Right ventricle myocardium superior (tissue), 1 donor: ENCODE measurements at regions of chr1 and their contacts with region 1.

Region 1: DNA sequence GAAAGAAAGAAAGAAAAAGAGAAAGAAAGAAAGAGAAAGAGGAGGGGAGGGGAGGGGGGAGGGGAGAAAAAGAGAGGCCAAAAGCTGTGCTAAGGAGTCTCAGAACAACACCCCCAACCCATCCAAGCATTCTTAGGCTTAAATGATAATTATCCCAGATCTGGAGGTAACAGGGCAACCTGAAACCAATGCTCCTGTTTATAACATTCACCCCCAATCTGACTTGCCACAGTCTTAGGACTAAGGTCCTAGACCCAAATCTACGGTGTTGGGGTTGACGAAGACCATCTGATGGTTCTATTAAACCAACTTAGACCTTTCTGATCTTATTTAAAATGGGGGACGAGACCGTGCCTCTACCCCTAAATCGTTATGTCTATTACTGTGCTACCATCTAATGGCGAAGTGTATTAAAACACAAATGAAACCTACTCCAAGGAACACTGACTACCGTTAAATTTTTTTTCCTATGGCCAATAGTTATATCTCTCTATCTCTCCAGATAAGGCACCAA is 119.3 kb upstream of the CDC42BPA start:
- DNase-seq: no peak
- ATAC-seq: peak; percentile 71

Region 2: GRCh38 chr1:227131193-227131592 is 306.4 kb before region 1 on chr1:
- intact Hi-C with region 1: loop called (anchors 5 kb)
- DNase-seq: no peak
- ATAC-seq: peak; percentile 29

Region 3: DNA sequence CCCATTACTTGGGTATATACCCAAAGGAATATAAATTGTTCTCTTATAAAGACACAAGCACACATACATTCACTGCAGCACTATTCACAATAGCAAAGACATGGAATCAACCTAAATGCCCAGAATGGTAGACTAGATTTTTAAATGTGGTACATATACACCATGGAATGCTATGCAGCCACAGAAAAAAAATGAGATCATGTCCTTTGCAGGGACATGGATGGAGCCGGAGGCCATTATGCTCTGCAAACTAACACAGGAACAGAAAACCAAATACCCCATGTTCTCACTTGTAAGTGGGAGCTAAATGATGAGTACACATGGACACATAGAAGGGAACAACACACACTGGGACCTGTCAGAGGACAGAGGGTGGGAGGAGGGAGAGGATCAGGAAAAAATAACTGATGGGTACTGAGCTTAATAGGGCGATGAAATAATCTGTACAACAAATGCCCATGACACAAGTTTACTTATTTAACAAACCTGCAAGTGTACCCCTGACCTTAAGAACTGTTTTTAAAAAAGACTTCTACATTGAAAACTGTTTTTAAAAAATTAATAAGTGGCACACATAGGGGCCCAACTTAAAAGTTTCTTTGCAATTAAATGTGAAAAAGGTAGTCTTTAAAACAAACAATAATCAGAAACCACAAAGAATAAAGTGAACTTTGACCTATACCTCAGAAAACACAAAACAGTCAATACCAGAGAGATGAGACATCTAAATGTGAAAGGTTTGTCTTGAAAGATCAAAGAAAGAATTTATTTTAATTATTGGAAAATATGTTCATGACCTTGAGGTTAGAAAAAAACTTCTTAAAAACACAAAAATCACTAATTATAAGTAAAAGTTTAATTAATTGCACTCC is 194.5 kb before region 1 on chr1:
- intact Hi-C with region 1: loop called (anchors 5 kb)
- DNase-seq: no peak
- ATAC-seq: peak; percentile 62

Region 4: DNA sequence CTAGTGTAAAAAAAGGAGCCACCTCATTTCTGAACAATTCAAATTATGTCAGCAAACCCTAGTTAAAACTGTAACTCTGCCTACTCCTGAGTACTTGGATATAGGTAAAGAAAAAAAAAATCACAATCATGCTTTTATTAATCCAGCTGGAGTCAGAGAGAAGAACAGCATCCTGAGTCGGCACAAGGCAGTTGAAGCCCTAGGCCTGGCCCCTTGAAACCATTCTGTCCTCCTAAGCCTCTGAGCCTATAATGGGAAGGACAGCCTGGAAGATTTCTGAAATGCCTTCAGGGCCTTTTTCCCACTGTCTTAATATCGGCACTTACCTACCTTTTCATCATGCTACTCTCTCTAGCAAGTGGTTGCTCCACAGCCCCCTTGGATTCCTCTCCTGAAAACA is 151.8 kb before region 1 on chr1:
- intact Hi-C with region 1: no loop called
- DNase-seq: no peak
- ATAC-seq: no peak

Region 5: DNA sequence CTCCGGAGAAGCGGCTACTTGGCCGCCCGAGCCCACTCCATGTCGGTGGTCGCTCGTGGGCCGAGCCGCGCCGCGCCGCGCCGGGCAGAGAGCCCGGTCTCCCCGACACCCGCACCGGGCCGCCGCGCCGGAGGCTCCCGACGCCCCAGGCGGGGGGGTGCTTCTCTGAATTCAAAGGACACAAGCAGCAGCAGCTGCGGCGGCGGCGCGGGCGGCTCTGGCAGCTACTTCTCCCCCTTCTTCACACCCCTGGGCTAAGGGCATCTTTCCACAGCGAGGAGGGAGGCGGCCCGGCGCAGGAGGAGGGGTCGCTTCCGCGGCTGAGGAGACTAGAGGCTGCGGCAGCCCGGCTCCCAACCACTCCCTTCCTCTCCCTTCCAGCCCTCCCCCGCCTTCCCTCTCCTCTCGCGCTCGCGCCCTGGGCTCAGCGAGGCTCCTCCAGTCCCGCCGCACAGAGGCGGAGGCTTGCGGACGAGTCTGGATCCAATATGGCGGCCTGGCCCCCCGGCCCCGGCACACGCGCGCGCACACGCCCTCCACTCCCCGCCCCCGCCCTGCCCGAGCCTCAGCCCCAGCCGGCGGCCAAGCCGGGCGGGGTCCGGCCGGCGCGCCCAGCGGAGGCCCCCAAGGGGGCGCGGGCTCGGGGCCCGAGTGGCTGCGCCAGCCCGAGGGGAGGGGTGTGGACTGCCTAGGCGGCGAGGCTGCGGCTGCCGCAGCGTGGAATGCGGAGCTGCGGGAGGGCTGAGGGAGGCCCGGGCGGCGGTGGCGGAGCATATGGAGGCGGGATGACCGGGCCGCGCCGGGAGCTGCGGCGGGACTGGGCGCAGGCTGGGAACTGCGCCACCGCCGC is 119.3 kb before region 1 on chr1 and contains the start of gene CDC42BPA:
- intact Hi-C with region 1: loop called (anchors 5 kb)
- DNase-seq: peak; percentile 92
- ATAC-seq: peak; percentile 87
- total RNA-seq, gene CDC42BPA: 40.5 TPM

Region 6: GRCh38 chr1:227621211-227621610 is 183.7 kb after region 1 on chr1:
- intact Hi-C with region 1: no loop called
- DNase-seq: no peak
- ATAC-seq: no peak

Region 7: DNA sequence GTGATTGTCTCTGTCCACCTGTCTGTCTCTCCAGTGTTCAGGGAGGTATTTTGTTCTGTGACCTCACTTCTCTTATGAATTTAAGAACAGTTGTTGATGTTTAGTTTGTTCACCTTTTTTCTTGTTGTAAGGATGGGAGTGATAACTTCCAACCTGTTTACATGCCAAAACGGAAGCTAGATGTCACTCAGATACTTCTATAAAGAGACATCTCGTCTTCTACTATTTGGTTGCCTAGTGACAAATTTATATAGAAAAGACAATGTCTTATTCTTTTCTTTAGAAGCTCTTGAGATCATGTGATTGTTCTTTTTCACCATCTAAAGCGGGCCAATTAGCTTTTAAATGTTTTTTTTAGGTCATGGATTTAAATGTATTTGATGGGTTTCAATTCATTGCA is 411.7 kb after region 1 on chr1:
- intact Hi-C with region 1: no loop called
- DNase-seq: no peak
- ATAC-seq: no peak